Activated CD4-positive, alpha-beta T cell treated with anti-CD3 and anti-CD28 coated beads for 36 hours (primary cell): ENCODE measurements at regions of chr19 and their contacts with region 1.

Region 1: GRCh38 chr19:6048808-6049405 is 61.4 kb downstream of the RFX2 start:
- DNase-seq: peak; percentile 87
- ATAC-seq: peak; percentile 100
- H3K4me3 Mint-ChIP-seq: no peak overlapping the region
- H3K27ac Mint-ChIP-seq: no peak overlapping the region
- H3K4me1 Mint-ChIP-seq: peaks cover 5% of the 10 kb centered on the region
- H3K27me3 Mint-ChIP-seq: peaks cover 4% of the 10 kb centered on the region

Region 2: GRCh38 chr19:5595129-5595528 is 453.8 kb before region 1 on chr19:
- CTCF ChIA-PET with region 1: no interaction called
- POLR2A ChIA-PET with region 1: no interaction called
- intact Hi-C with region 1: no loop called
- DNase-seq: no peak
- ATAC-seq: no peak
- H3K4me3 Mint-ChIP-seq: no peak overlapping the region
- H3K27ac Mint-ChIP-seq: no peak overlapping the region
- H3K4me1 Mint-ChIP-seq: no peaks in the 10 kb centered on the region
- H3K27me3 Mint-ChIP-seq: no peaks in the 10 kb centered on the region

Region 3: GRCh38 chr19:6125571-6125989 is 76.7 kb after region 1 on chr19:
- CTCF ChIA-PET with region 1: interaction called, 78 read pairs
- POLR2A ChIA-PET with region 1: no interaction called
- intact Hi-C with region 1: loop called (anchors 1 kb)
- DNase-seq: peak; percentile 75
- ATAC-seq: peak; percentile 84
- H3K4me3 Mint-ChIP-seq: no peak overlapping the region
- H3K27ac Mint-ChIP-seq: no peak overlapping the region
- H3K4me1 Mint-ChIP-seq: no peaks in the 10 kb centered on the region
- H3K27me3 Mint-ChIP-seq: peaks cover 3% of the 10 kb centered on the region